A673 (cell line): ENCODE measurements at regions of chr14 and their contacts with region 1.

Region 1: DNA sequence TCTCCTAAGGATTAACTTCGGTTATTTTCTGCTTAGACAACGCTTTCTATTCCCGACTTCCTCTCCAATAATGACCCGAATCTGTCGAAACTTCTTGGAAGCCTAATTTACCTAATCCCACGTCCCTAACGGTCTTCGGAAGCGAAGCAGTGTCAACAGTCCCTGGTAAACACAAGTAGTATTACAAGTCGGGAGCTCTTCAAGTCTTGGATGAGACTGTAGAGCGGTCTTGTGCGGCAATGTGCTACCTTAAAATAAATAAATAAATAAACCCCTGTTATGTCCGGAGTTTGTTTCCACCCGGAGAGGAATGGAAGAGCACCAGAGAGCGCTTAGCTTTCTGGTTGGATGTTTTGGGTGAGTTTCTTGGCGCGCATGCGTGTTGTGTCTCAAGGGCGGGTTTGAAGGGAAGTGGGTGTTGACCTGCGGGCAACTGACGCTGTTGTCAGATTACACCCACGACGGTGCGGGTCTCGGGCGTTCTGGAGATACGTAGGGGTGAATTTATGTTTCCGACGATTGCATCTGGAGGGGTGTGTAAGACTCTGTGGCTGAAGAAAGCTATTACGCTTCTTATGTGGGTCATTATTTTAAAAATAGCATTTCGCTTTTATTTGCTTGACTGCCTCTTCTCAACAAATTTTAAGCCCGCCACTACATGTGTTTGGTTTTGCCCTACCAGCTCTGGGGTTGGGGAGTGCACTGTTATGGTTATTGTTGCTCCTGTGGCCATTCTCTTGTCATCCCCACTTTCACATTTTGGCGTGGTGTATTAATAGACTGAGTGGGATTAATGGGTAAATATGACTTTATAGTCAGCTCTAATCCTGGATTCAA is at the starts of genes KIAA0586 and TIMM9:
- DNase-seq: peak; percentile 99
- H3K4me3 ChIP-seq: peak within 1 kb of the TSS; percentile 86
- H3K27ac ChIP-seq: peak within 1 kb of the TSS; percentile 98
- H3K4me1 ChIP-seq: peaks cover 12% of the 10 kb centered on the region
- H3K27me3 ChIP-seq: no peaks in the 10 kb centered on the region
- CTCF ChIP-seq: no peak
- total RNA-seq, gene KIAA0586: 42.1 and 45.3 TPM in 2 replicates
- total RNA-seq, gene TIMM9: 60.3 and 65.7 TPM in 2 replicates

Region 2: GRCh38 chr14:58408681-58409215 is 18.8 kb before region 1 on chr14:
- CTCF ChIA-PET with region 1: interaction called, 3 read pairs
- POLR2A ChIA-PET with region 1: interaction called, 21 read pairs
- intact Hi-C with region 1: no loop called
- DNase-seq: no peak
- H3K4me3 ChIP-seq: no peak overlapping the region
- H3K27ac ChIP-seq: no peak overlapping the region
- H3K4me1 ChIP-seq: no peaks in the 10 kb centered on the region
- H3K27me3 ChIP-seq: no peaks in the 10 kb centered on the region
- CTCF ChIP-seq: no peak